K562 (cell line): ENCODE measurements at regions of chr17 and their contacts with region 1.

Region 1: GRCh38 chr17:4199818-4200402 is 56.9 kb downstream of the CYB5D2 start:
- DNase-seq: peak; percentile 51 to 57 (median 54)
- ATAC-seq: peak; percentile 66
- H3K4me3 ChIP-seq: no peak overlapping the region
- H3K27ac ChIP-seq: no peak overlapping the region
- H3K4me1 ChIP-seq: no peaks in the 10 kb centered on the region; a peak in 1 of 5 replicates
- H3K27me3 ChIP-seq: no peaks in the 10 kb centered on the region
- CTCF ChIP-seq: peak; percentile 62 to 69 (median 63)
- EP300 ChIP-seq: no peak
- POLR2A ChIP-seq: no peak
- RAD21 ChIP-seq: peak in 1 of 2 experiments; percentile 39; a peak in 2 of 4 replicates

Region 2: DNA sequence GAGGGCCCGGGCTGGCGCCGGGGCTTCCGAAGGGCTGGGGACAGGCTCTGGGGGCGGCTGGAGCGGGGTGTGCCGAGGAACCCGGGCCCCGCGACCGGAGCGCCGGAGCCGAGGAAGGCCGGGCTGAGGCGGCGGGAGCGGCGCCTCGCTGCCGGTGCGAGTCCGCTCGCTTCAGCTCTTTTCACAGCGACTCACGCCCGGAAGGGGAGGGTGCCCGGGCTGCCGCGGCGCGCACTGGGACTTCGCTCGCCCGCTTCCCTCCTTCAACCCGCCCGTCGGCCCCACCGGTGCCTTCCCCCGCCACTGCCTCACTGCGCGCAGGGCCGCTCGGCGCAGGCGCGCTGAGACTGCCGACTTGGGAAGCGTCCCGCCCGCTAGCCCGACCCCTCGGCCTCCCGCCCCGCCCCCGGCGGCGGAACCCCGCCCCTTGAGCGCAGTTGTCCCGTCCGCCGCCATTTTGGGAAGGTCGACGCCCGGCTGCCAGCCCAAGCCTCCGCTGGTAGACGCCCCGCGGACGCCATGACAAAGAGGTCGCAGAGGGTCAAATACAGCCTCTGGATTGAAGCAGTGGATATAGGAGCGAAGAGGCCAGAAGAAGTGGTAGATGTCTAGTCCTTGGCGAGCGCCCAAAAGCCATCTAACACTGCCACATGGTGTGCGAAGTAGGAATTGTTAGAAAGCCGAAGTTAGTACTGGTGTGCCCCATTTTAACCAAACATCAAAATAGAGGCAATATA is 166.6 kb after region 1 on chr17 and contains the start of gene UBE2G1:
- CTCF ChIA-PET with region 1: no interaction called
- POLR2A ChIA-PET with region 1: no interaction called
- in situ Hi-C with region 1: no loop called
- intact Hi-C with region 1: loop called (anchors 1 kb)
- DNase-seq: peak; percentile 93 to 96 (median 94)
- ATAC-seq: peak; percentile 93
- H3K4me3 ChIP-seq: peak within 1 kb of the TSS; percentile 91
- H3K27ac ChIP-seq: peak within 1 kb of the TSS; percentile 90
- H3K4me1 ChIP-seq: peaks cover 2 to 25% of the 10 kb centered on the region in 2 experiments; a peak in 3 of 5 replicates
- H3K27me3 ChIP-seq: no peaks in the 10 kb centered on the region
- CTCF ChIP-seq: peak; percentile 53 to 72 (median 67)
- EP300 ChIP-seq: no peak
- POLR2A ChIP-seq: peak; percentile 79
- RAD21 ChIP-seq: peak; percentile 71 to 88
- polyA plus RNA-seq, gene UBE2G1: 10.1 to 16.4 TPM

Region 3: GRCh38 chr17:4412933-4413831 is 213.3 kb after region 1 on chr17:
- CTCF ChIA-PET with region 1: interaction called, 12 read pairs
- POLR2A ChIA-PET with region 1: interaction called, 3 read pairs
- in situ Hi-C with region 1: loop called (anchors 10 kb)
- intact Hi-C with region 1: loop called (anchors 5 kb)
- DNase-seq: peak; percentile 75 to 89 (median 78)
- ATAC-seq: peak; percentile 99
- H3K4me3 ChIP-seq: no peak overlapping the region
- H3K27ac ChIP-seq: no peak overlapping the region
- H3K4me1 ChIP-seq: peaks cover 0 to 3% of the 10 kb centered on the region in 2 experiments; a peak in 2 of 5 replicates
- H3K27me3 ChIP-seq: no peaks in the 10 kb centered on the region
- CTCF ChIP-seq: peak; percentile 86 to 96 (median 91)
- EP300 ChIP-seq: no peak
- POLR2A ChIP-seq: no peak
- RAD21 ChIP-seq: peak; percentile 78 to 91